G401 (cell line): ENCODE measurements at regions of chr18 and their contacts with region 1.

Region 1: GRCh38 chr18:50203801-50204604 is 9.1 kb upstream of the MYO5B start:
- DNase-seq: peak; percentile 74

Region 2: DNA sequence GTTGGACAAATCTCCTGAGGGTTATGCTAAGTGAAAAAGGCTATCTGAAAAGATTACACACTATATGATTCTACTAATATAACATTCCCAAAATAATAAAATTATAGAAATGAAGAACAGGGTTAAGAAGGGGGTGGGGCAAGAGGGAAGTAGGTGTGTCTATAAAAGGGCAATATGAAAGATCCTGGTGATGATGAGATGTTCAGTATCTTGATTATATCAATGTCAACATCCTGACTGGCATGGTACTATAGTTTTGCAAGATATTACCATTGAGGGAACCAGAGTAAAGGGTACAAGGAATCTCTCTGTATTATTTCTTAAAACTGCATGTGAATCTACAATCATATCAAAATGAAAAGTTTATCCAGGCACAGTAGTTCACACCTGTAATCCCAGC is 45.6 kb after region 1 on chr18:
- in situ Hi-C with region 1: no loop called
- DNase-seq: no peak

Region 3: GRCh38 chr18:50374753-50375391 is 170.9 kb after region 1 on chr18 and contains the start of gene SKA1:
- in situ Hi-C with region 1: loop called (anchors 25 kb)
- DNase-seq: peak; percentile 93
- total RNA-seq, gene SKA1: 16.7 and 32.6 TPM in 2 replicates